IMR-90 (cell line): ENCODE measurements at regions of chr1 and their contacts with region 1.

Region 1: DNA sequence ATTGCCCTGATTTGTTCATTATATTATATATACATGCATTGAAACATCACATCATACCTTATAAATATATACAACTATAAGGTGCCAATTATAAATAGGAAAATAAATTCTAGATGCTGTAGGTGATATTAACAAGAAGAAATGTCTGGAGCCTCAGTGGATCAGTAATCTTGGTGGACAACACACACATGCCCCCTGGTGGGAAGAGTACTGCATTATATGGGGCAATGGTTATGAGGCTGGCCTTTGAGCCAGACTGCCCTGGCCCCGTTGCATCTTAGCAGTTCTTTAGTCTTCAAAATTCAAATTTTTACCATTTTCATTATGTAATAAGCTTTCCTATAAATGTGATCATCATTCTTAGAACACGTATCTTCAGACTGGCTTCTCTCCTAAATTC is 335.0 kb upstream of the GREM2 start:
- DNase-seq: peak; percentile 54
- ATAC-seq: peak; percentile 97
- H3K4me3 ChIP-seq: no peak overlapping the region
- H3K27ac ChIP-seq: no peak overlapping the region
- H3K4me1 ChIP-seq: no peaks in the 10 kb centered on the region
- H3K27me3 ChIP-seq: no peaks in the 10 kb centered on the region; the same call in 1 of the 2 replicates
- CTCF ChIP-seq: peak; percentile 75
- POLR2A ChIP-seq: no peak
- RAD21 ChIP-seq: peak; percentile 80

Region 2: GRCh38 chr1:240149484-240150094 is 797.3 kb before region 1 on chr1:
- CTCF ChIA-PET with region 1: no interaction called
- POLR2A ChIA-PET with region 1: no interaction called
- dilution Hi-C with region 1: no loop called
- in situ Hi-C with region 1: loop called (anchors 25 kb)
- intact Hi-C with region 1: no loop called
- DNase-seq: peak; percentile 52
- ATAC-seq: peak; percentile 63; the same call in 1 of the 2 replicates
- H3K4me3 ChIP-seq: no peak overlapping the region
- H3K27ac ChIP-seq: no peak overlapping the region
- H3K4me1 ChIP-seq: peaks cover 4% of the 10 kb centered on the region; the same call in 1 of the 2 replicates
- H3K27me3 ChIP-seq: no peaks in the 10 kb centered on the region
- CTCF ChIP-seq: peak; percentile 64
- POLR2A ChIP-seq: no peak
- RAD21 ChIP-seq: peak; percentile 54

Region 3: GRCh38 chr1:240888039-240888786 is 58.7 kb before region 1 on chr1:
- CTCF ChIA-PET with region 1: interaction called, 3 read pairs
- POLR2A ChIA-PET with region 1: no interaction called
- dilution Hi-C with region 1: no loop called
- in situ Hi-C with region 1: no loop called
- intact Hi-C with region 1: loop called (anchors 5 kb)
- DNase-seq: no peak
- ATAC-seq: no peak
- H3K4me3 ChIP-seq: no peak overlapping the region
- H3K27ac ChIP-seq: no peak overlapping the region
- H3K4me1 ChIP-seq: no peaks in the 10 kb centered on the region
- H3K27me3 ChIP-seq: no peaks in the 10 kb centered on the region
- CTCF ChIP-seq: peak; percentile 40
- POLR2A ChIP-seq: no peak
- RAD21 ChIP-seq: peak; percentile 48

Region 4: GRCh38 chr1:241499910-241500309 is 553.0 kb after region 1 on chr1:
- CTCF ChIA-PET with region 1: no interaction called
- POLR2A ChIA-PET with region 1: no interaction called
- dilution Hi-C with region 1: no loop called
- in situ Hi-C with region 1: no loop called
- intact Hi-C with region 1: loop called (anchors 5 kb)
- DNase-seq: peak; percentile 62
- ATAC-seq: peak; percentile 71
- H3K4me3 ChIP-seq: no peak overlapping the region
- H3K27ac ChIP-seq: no peak overlapping the region
- H3K4me1 ChIP-seq: no peaks in the 10 kb centered on the region
- H3K27me3 ChIP-seq: no peaks in the 10 kb centered on the region
- CTCF ChIP-seq: peak; percentile 60
- POLR2A ChIP-seq: no peak
- RAD21 ChIP-seq: peak; percentile 77